Endothelial cell of umbilical vein (primary cell): ENCODE measurements at regions of chr17 and their contacts with region 1.

Region 1: GRCh38 chr17:77429919-77430752 is 289.4 kb downstream of the SEC14L1 start:
- DNase-seq: peak; percentile 92
- H3K4me3 ChIP-seq: no peak overlapping the region
- H3K27ac ChIP-seq: peak overlapping the region; percentile 31
- H3K4me1 ChIP-seq: peaks cover 24% of the 10 kb centered on the region
- H3K27me3 ChIP-seq: no peaks in the 10 kb centered on the region
- CTCF ChIP-seq: peak; percentile 81 to 85
- POLR2A ChIP-seq: peak; percentile 9

Region 2: GRCh38 chr17:77331301-77331864 is 98.8 kb before region 1 on chr17:
- CTCF ChIA-PET with region 1: interaction called, 93 read pairs
- POLR2A ChIA-PET with region 1: no interaction called
- dilution Hi-C with region 1: no loop called
- intact Hi-C with region 1: loop called (anchors 1 kb)
- DNase-seq: peak; percentile 78
- H3K4me3 ChIP-seq: peak overlapping the region in 1 of 3 experiments; percentile 14
- H3K27ac ChIP-seq: no peak overlapping the region
- H3K4me1 ChIP-seq: peaks cover 5% of the 10 kb centered on the region
- H3K27me3 ChIP-seq: no peaks in the 10 kb centered on the region
- CTCF ChIP-seq: peak; percentile 85 to 95
- POLR2A ChIP-seq: no peak

Region 3: GRCh38 chr17:77444984-77445759 is 15.0 kb after region 1 on chr17:
- CTCF ChIA-PET with region 1: interaction called, 13 read pairs
- POLR2A ChIA-PET with region 1: no interaction called
- dilution Hi-C with region 1: no loop called
- intact Hi-C with region 1: loop called (anchors 2 kb)
- DNase-seq: no peak
- H3K4me3 ChIP-seq: no peak overlapping the region
- H3K27ac ChIP-seq: no peak overlapping the region
- H3K4me1 ChIP-seq: peaks cover 13% of the 10 kb centered on the region
- H3K27me3 ChIP-seq: no peaks in the 10 kb centered on the region
- CTCF ChIP-seq: no peak
- POLR2A ChIP-seq: no peak

Region 4: DNA sequence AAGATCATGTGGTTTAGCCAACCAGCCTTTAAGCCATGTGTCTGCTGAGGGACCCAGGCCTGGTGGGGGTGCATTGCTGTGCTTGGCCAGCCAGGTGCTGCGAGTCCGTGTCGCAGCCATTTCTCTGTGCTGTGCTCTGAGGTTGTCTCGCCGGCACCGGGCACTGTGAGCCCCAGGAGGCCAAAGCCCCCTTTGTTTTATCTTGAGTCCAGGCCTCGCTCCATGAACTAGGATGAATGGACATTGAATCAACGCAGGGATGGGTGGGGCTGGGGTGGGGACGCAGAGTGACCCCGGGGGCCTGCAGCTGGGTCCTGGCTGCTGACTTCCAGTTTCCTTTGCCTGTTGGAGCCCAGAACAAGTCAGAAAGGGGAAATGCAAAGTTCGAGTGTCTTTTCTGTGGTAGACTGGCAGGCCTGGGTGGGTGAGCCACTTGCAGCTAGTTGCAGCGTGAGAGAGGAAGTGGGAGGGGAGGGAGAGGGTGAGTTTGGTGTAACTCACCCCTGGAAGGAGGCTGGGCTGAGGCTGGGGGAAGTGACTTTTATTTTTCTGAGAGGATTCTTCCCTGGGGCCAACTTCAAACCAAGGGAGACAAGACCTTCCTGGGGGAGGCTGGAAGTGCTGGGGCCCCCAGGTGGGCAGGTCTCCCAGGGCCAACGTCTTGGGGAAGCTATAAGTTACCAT is 35.4 kb after region 1 on chr17:
- CTCF ChIA-PET with region 1: interaction called, 10 read pairs
- POLR2A ChIA-PET with region 1: no interaction called
- dilution Hi-C with region 1: no loop called
- intact Hi-C with region 1: no loop called
- DNase-seq: peak; percentile 55
- H3K4me3 ChIP-seq: no peak overlapping the region
- H3K27ac ChIP-seq: no peak overlapping the region
- H3K4me1 ChIP-seq: peaks cover 15% of the 10 kb centered on the region
- H3K27me3 ChIP-seq: no peaks in the 10 kb centered on the region
- CTCF ChIP-seq: no peak
- POLR2A ChIP-seq: no peak

Region 5: DNA sequence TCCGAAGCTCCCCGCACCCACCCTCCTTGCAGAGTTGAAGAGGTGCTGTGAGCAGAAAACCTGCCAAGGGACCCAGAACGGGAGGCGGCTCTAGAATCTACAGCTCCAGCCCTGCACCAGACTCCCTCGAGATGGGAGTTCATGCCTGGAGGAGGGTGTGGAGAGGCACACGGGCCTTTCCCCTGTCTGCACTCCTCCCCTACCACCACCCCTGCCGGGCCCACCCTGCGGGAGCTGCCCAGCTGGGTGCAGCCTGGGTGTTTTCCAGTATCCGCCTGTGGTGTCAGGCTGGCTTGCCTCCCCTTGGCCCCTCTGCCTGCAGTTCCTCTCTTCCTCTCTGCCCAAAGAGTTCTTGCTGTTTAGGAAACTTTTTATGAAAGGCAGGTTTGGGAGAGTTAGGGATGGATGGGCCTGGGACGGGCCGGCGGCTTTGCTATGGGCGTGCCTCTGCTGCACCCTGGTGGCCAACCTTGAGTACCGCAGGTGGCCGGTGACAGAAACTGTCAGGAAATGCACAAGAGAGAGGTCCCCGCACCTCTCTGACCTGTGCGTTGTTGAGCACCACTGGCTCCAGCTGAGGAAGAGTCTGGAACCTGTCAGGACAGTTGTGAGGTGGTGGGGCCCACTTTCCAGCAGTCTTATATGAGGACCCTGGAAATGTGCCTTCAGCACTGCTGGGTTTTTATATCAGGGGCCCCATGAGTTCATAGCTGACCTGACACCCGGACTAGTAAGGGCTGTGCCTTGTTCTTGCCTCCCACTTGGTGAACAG is 64.7 kb after region 1 on chr17:
- CTCF ChIA-PET with region 1: interaction called, 88 read pairs
- POLR2A ChIA-PET with region 1: no interaction called
- dilution Hi-C with region 1: no loop called
- intact Hi-C with region 1: loop called (anchors 1 kb)
- DNase-seq: peak; percentile 60
- H3K4me3 ChIP-seq: no peak overlapping the region
- H3K27ac ChIP-seq: no peak overlapping the region
- H3K4me1 ChIP-seq: peaks cover 3% of the 10 kb centered on the region
- H3K27me3 ChIP-seq: no peaks in the 10 kb centered on the region
- CTCF ChIP-seq: peak; percentile 83 to 94
- POLR2A ChIP-seq: no peak

Region 6: GRCh38 chr17:77681861-77682260 is 251.7 kb after region 1 on chr17:
- CTCF ChIA-PET with region 1: no interaction called
- POLR2A ChIA-PET with region 1: no interaction called
- dilution Hi-C with region 1: no loop called
- intact Hi-C with region 1: no loop called
- DNase-seq: no peak
- H3K4me3 ChIP-seq: no peak overlapping the region
- H3K27ac ChIP-seq: no peak overlapping the region
- H3K4me1 ChIP-seq: no peaks in the 10 kb centered on the region
- H3K27me3 ChIP-seq: peaks cover 0 to 2% of the 10 kb centered on the region in 2 experiments
- CTCF ChIP-seq: no peak
- POLR2A ChIP-seq: no peak